IMR-90 (cell line): ENCODE measurements at regions of chr5 and their contacts with region 1.

Region 1: GRCh38 chr5:147188200-147189108 is 46.4 kb upstream of the STK32A start:
- DNase-seq: peak; percentile 59
- ATAC-seq: peak; percentile 90
- H3K4me3 ChIP-seq: no peak overlapping the region
- H3K27ac ChIP-seq: no peak overlapping the region
- H3K4me1 ChIP-seq: no peaks in the 10 kb centered on the region
- H3K27me3 ChIP-seq: no peaks in the 10 kb centered on the region
- CTCF ChIP-seq: peak; percentile 79
- POLR2A ChIP-seq: no peak
- RAD21 ChIP-seq: peak; percentile 75

Region 2: DNA sequence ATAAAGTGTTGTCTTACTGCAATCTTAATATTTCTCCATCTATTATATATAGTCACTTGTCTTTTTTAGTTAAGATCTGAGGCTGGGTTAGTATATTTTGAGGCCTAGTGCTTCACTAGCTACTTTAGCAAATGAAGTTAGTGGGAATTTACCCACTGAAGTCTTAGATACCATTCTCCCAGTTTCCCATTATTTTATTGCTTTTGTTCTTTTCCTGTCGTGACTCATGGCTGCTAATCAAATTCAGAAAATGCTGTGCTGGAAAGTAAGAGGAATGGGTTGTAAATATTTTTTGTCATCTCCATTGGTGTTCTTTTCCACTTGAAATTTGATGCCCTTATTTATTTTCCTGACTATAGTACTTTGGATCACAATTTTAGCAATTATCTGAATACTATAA is 727.1 kb before region 1 on chr5:
- CTCF ChIA-PET with region 1: no interaction called
- POLR2A ChIA-PET with region 1: no interaction called
- dilution Hi-C with region 1: no loop called
- in situ Hi-C with region 1: no loop called
- intact Hi-C with region 1: loop called (anchors 5 kb)
- DNase-seq: peak; percentile 20
- ATAC-seq: peak; percentile 24; the same call in 1 of the 2 replicates
- H3K4me3 ChIP-seq: no peak overlapping the region
- H3K27ac ChIP-seq: no peak overlapping the region
- H3K4me1 ChIP-seq: no peaks in the 10 kb centered on the region
- H3K27me3 ChIP-seq: no peaks in the 10 kb centered on the region
- CTCF ChIP-seq: no peak
- POLR2A ChIP-seq: no peak
- RAD21 ChIP-seq: no peak

Region 3: GRCh38 chr5:146541958-146542849 is 646.2 kb before region 1 on chr5:
- CTCF ChIA-PET with region 1: interaction called, 9 read pairs
- POLR2A ChIA-PET with region 1: no interaction called
- dilution Hi-C with region 1: no loop called
- in situ Hi-C with region 1: loop called (anchors 10 kb)
- intact Hi-C with region 1: loop called (anchors 1 kb)
- DNase-seq: peak; percentile 47
- ATAC-seq: peak; percentile 95
- H3K4me3 ChIP-seq: no peak overlapping the region
- H3K27ac ChIP-seq: no peak overlapping the region
- H3K4me1 ChIP-seq: no peaks in the 10 kb centered on the region
- H3K27me3 ChIP-seq: peaks cover 7% of the 10 kb centered on the region
- CTCF ChIP-seq: peak; percentile 76
- POLR2A ChIP-seq: no peak
- RAD21 ChIP-seq: peak; percentile 76

Region 4: GRCh38 chr5:146825033-146825432 is 363.4 kb before region 1 on chr5:
- CTCF ChIA-PET with region 1: no interaction called
- POLR2A ChIA-PET with region 1: no interaction called
- dilution Hi-C with region 1: no loop called
- in situ Hi-C with region 1: no loop called
- intact Hi-C with region 1: no loop called
- DNase-seq: peak; percentile 11
- ATAC-seq: no peak
- H3K4me3 ChIP-seq: no peak overlapping the region
- H3K27ac ChIP-seq: no peak overlapping the region
- H3K4me1 ChIP-seq: no peaks in the 10 kb centered on the region
- H3K27me3 ChIP-seq: no peaks in the 10 kb centered on the region
- CTCF ChIP-seq: no peak
- POLR2A ChIP-seq: no peak
- RAD21 ChIP-seq: no peak

Region 5: GRCh38 chr5:147098233-147098790 is 90.1 kb before region 1 on chr5:
- CTCF ChIA-PET with region 1: interaction called, 11 read pairs
- POLR2A ChIA-PET with region 1: no interaction called
- dilution Hi-C with region 1: no loop called
- in situ Hi-C with region 1: no loop called
- intact Hi-C with region 1: loop called (anchors 1 kb)
- DNase-seq: peak; percentile 34
- ATAC-seq: peak; percentile 57
- H3K4me3 ChIP-seq: no peak overlapping the region
- H3K27ac ChIP-seq: no peak overlapping the region
- H3K4me1 ChIP-seq: no peaks in the 10 kb centered on the region
- H3K27me3 ChIP-seq: no peaks in the 10 kb centered on the region
- CTCF ChIP-seq: peak; percentile 55
- POLR2A ChIP-seq: no peak
- RAD21 ChIP-seq: peak; percentile 44

Region 6: GRCh38 chr5:147203213-147203612 is 14.8 kb after region 1 on chr5:
- CTCF ChIA-PET with region 1: interaction called, 12 read pairs
- POLR2A ChIA-PET with region 1: no interaction called
- dilution Hi-C with region 1: no loop called
- in situ Hi-C with region 1: no loop called
- intact Hi-C with region 1: no loop called
- DNase-seq: no peak
- ATAC-seq: no peak
- H3K4me3 ChIP-seq: no peak overlapping the region
- H3K27ac ChIP-seq: no peak overlapping the region
- H3K4me1 ChIP-seq: no peaks in the 10 kb centered on the region
- H3K27me3 ChIP-seq: no peaks in the 10 kb centered on the region
- CTCF ChIP-seq: no peak
- POLR2A ChIP-seq: no peak
- RAD21 ChIP-seq: no peak